HepG2 (cell line): ENCODE measurements at regions of chr2 and their contacts with region 1.

Region 1: DNA sequence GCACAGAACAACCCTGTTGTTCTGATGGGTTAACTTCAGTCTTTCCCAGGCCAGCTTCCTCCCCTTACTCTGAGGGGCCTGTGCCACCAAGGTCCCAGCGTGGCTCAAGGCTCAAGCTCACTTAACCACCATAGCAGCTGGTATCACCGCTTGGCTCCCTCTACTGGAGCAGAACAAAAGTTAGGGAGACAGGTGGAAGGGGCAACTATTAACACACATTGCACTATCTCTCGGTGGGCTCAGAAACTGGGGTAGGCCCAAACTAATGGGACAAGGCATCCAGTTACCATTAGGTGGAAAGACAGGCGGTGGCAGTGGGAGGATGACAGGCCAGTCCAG is 88.7 kb upstream of the ATL2 start:
- DNase-seq: peak; percentile 75
- ATAC-seq: peak; percentile 91
- H3K4me3 ChIP-seq: no peak overlapping the region
- H3K27ac ChIP-seq: no peak overlapping the region
- H3K4me1 ChIP-seq: peaks cover 49% of the 10 kb centered on the region
- H3K27me3 ChIP-seq: no peaks in the 10 kb centered on the region; a peak in 2 of 5 replicates
- CTCF ChIP-seq: peak; percentile 92
- EP300 ChIP-seq: no peak
- POLR2A ChIP-seq: no peak
- RAD21 ChIP-seq: peak; percentile 88

Region 2: DNA sequence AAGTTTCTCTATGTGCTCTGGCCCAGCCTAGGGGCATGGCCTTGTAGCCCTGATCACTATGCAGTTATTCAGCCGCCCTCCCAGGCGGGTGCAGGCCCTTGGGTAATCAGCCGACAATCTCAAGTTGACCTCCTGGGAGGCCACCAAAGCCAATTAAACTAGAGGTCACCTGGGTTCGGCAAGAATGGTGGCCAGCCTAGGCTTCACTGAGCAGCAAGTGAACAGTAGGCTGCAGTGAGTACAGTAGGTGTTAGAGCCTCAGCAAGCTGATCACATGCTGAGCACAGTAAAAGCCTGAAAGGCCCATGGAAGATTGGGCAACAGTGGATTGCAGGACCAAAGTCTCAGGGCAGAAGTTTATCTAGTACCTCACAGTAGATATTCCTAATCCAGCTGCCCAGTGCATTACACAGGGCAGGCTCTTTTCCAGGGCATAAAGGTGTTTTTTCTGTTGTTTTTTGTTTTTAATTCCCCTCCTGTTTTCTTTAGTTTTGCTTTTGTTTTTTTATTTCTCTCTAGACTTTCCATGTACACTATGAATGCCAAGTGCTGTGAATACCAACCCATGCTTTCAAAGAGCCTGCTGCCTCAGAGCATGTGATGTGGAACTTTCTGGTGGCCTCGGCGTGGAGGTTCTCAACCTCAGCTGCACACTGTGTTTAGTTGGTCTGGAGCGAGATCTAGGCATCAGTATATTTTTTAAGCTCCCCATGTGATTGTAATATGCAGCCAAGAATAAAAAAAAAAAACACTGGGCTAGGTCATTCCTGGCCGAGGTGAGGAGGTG is 32.7 kb before region 1 on chr2:
- CTCF ChIA-PET with region 1: no interaction called
- POLR2A ChIA-PET with region 1: no interaction called
- in situ Hi-C with region 1: no loop called
- intact Hi-C with region 1: loop called (anchors 1 kb)
- DNase-seq: peak; percentile 92
- ATAC-seq: peak; percentile 94
- H3K4me3 ChIP-seq: peak overlapping the region in 1 of 3 experiments; percentile 1; a peak in 1 of 6 replicates
- H3K27ac ChIP-seq: peak overlapping the region; percentile 64
- H3K4me1 ChIP-seq: peaks cover 68% of the 10 kb centered on the region
- H3K27me3 ChIP-seq: no peaks in the 10 kb centered on the region; a peak in 1 of 5 replicates
- CTCF ChIP-seq: peak; percentile 21; the same call in 1 of the 2 replicates
- EP300 ChIP-seq: peak; percentile 80 to 92; a peak in 3 of 4 replicates
- POLR2A ChIP-seq: no peak
- RAD21 ChIP-seq: peak; percentile 60

Region 3: DNA sequence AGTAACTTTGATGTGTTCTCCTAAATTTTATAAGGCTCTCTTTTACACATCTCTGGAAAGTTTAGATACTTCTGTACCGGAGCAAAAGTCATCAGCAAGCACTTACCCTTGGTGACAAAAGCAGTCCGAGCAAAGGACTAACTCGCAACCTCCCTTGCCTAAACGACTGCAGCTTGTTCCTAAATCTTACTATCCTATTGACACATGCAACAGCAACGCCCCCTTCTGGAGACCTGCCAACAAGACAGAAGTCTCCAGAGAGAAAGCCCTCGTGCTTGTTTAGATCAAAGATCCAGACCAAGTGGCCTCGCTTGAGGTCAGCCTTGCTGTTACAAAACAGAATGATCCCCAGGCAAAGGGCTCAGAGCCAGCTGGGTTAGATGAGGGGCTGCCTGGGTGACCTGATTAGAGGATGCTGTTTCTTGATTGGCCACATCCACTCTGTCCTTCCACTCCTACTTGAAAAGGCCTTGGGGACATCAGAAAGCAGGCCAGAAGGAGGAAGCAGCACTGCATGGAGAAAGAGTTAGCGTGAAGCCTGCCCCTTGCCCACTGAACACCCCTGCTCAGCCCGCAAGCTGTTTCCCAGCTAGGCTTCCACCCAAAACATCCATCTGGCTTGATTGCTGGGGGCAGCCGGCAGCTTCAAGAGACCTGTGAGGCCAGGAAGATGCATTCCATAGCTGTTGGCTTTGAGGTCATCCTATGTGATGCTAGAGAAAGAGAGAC is 42.7 kb after region 1 on chr2:
- CTCF ChIA-PET with region 1: interaction called, 4 read pairs
- POLR2A ChIA-PET with region 1: no interaction called
- in situ Hi-C with region 1: no loop called
- intact Hi-C with region 1: loop called (anchors 2 kb)
- DNase-seq: peak; percentile 95
- ATAC-seq: peak; percentile 87
- H3K4me3 ChIP-seq: no peak overlapping the region
- H3K27ac ChIP-seq: no peak overlapping the region
- H3K4me1 ChIP-seq: peaks cover 30% of the 10 kb centered on the region
- H3K27me3 ChIP-seq: no peaks in the 10 kb centered on the region
- CTCF ChIP-seq: peak; percentile 97
- EP300 ChIP-seq: 0 out of 4 replicates have a peak, but pooled peaks of 1 of the 2 experiments have one; percentile 24
- POLR2A ChIP-seq: no peak
- RAD21 ChIP-seq: peak; percentile 96

Region 4: GRCh38 chr2:39175026-39175812 is 709.5 kb after region 1 on chr2:
- CTCF ChIA-PET with region 1: no interaction called
- POLR2A ChIA-PET with region 1: no interaction called
- in situ Hi-C with region 1: no loop called
- intact Hi-C with region 1: no loop called
- DNase-seq: no peak
- ATAC-seq: no peak
- H3K4me3 ChIP-seq: no peak overlapping the region
- H3K27ac ChIP-seq: no peak overlapping the region
- H3K4me1 ChIP-seq: peaks cover 26% of the 10 kb centered on the region
- H3K27me3 ChIP-seq: no peaks in the 10 kb centered on the region
- CTCF ChIP-seq: no peak
- EP300 ChIP-seq: no peak
- POLR2A ChIP-seq: no peak
- RAD21 ChIP-seq: no peak